ENCODE measurements at regions of chr2 and their contacts with region 1.

Region 1: DNA sequence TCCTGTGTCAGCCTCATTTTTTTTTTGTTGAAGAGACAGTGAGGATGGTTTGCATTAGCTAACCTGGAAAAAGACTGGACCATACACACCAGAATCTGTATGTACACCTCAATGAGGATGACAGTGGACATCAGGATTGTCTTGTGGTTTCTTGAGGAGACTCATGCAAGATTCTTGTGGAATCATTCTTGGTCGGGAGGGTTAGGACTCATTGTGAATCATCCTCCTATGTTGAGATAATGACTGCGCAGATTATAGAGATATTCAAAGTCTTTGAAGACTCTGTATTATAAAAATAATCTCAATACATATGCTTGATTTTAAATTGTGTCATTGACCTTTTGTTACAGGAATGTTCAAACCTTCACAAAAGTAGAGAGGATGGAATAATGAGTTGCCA is 49.1 kb upstream of the DOCK10 start:
- DNase-seq: no peak
- H3K4me3 ChIP-seq: no peak overlapping the region
- CTCF ChIP-seq: no peak

Region 2: DNA sequence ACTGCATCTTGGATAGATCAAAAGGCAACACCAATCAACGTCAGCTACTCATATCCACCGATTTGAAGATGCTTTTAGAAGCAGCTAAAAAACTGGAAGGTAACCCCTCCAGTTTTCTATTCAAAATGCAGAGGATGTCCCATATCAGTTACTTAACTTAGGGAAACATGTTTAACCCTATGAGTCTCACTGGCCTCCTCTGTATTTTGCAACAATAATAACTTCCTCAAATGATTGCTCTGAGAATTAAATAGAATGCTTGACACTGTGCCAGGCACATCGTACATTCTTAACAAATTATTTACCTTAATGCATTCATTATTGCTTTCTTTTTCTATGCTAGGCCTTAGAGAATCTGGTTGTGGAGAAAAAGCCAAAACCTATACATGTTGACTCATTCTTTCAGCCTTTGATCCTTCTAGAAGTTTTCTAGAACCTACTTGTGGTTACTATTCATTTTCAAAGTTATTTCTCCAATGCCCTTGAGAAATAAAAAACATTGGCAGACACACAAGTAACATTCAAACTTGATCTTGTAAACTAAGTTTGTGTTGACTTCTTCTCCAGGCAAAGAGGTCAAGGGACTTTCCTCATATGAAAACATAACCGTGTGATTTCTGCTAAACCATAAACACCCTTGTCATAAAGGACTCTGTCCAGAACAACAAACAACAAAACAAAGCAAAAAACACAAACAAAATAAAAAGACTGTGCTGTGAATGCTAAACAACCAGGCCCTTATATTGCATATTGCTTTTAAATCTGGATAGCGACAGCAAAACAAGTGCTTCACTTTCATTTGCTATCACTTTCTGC is 53.7 kb before region 1 on chr2:
- in situ Hi-C with region 1: loop called (anchors 5 kb)
- DNase-seq: no peak
- H3K4me3 ChIP-seq: no peak overlapping the region
- CTCF ChIP-seq: no peak

Region 3: GRCh38 chr2:225056330-225057065 is 34.8 kb before region 1 on chr2:
- in situ Hi-C with region 1: no loop called
- DNase-seq: no peak
- H3K4me3 ChIP-seq: no peak overlapping the region
- CTCF ChIP-seq: no peak